GM12878 (cell line): ENCODE measurements at regions of chr2 and their contacts with region 1.

Region 1: GRCh38 chr2:101770726-101771125 is 73.2 kb downstream of the MAP4K4 start:
- DNase-seq: peak; percentile 30
- ATAC-seq: peak; percentile 95
- H3K4me3 ChIP-seq: no peak overlapping the region
- H3K27ac ChIP-seq: no peak overlapping the region
- H3K4me1 ChIP-seq: no peaks in the 10 kb centered on the region
- H3K27me3 ChIP-seq: no peaks in the 10 kb centered on the region
- CTCF ChIP-seq: peak; percentile 54 to 70 (median 56); a peak in 5 of 6 replicates
- EP300 ChIP-seq: no peak
- POLR2A ChIP-seq: no peak
- RAD21 ChIP-seq: peak; percentile 52

Region 2: GRCh38 chr2:101400048-101400447 is 370.7 kb before region 1 on chr2:
- CTCF ChIA-PET with region 1: no interaction called
- POLR2A ChIA-PET with region 1: no interaction called
- RAD21 ChIA-PET with region 1: no interaction called
- SMC1A ChIA-PET with region 1: no interaction called
- in situ Hi-C with region 1: no loop called
- intact Hi-C with region 1: no loop called
- DNase-seq: no peak
- ATAC-seq: no peak
- H3K4me3 ChIP-seq: no peak overlapping the region
- H3K27ac ChIP-seq: no peak overlapping the region
- H3K4me1 ChIP-seq: no peaks in the 10 kb centered on the region
- H3K27me3 ChIP-seq: peaks cover 0 to 14% of the 10 kb centered on the region in 2 experiments; a peak in 2 of 4 replicates
- CTCF ChIP-seq: no peak
- EP300 ChIP-seq: no peak
- POLR2A ChIP-seq: no peak
- RAD21 ChIP-seq: no peak

Region 3: DNA sequence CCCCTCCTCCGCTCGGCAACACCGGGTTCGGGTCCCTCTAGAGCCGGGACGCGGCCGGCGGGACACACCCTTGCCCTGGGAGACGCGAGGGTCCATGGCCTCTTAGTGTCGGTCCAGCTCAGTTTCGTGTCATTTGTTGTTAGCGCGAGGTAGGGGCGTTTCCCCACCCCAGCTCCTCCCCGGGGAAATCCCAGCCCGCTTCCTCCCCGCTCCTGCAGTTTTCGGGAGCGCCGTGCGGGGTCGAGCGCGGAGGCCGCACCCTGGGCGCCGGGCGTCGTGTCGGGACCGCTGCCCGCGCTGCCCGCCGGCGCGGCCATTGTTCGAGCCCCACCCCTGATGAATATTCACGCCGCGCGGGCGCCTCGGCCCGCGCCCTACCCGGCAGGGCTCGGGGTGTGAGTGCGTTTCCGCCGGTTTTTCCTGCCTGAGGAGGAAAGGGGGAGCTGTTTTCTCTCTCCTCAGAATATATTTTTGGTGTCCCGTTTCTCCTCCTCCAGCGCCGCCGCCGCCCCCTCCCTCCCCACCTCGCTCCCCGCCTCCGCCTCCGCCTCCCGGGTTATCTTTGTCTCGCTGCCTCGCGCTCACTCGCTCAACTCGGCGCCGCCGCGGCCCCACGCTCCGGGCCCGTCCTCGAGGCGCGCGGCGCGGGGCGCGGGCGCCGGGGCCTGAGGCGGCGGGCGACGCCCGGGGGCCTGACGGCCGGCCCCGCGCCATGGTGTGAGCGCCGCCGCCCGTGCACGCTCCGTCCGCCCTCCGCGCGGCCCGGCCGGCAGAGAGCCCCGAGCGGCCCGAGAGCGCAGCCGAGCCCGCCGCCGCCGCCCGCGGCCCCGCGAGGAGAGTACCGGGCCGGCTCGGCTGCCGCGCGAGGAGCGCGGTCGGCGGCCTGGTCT is 73.4 kb before region 1 on chr2 and contains the start of gene MAP4K4:
- CTCF ChIA-PET with region 1: interaction called, 15 read pairs
- POLR2A ChIA-PET with region 1: no interaction called
- RAD21 ChIA-PET with region 1: interaction called, 3 read pairs
- SMC1A ChIA-PET with region 1: interaction called, 3 read pairs
- in situ Hi-C with region 1: no loop called
- intact Hi-C with region 1: no loop called
- DNase-seq: no peak
- ATAC-seq: peak; percentile 68
- H3K4me3 ChIP-seq: peak within 1 kb of the TSS; percentile 49
- H3K27ac ChIP-seq: no peak within 1 kb of the TSS
- H3K4me1 ChIP-seq: no peaks in the 10 kb centered on the region; the same call in 1 of the 2 replicates
- H3K27me3 ChIP-seq: peaks cover 2 to 22% of the 10 kb centered on the region in 2 experiments; a peak in 3 of 4 replicates
- CTCF ChIP-seq: peak in 1 of 3 experiments; percentile 10; a peak in 1 of 6 replicates
- EP300 ChIP-seq: no peak
- POLR2A ChIP-seq: 0 out of 2 replicates have a peak, but pooled peaks have one; percentile 24
- RAD21 ChIP-seq: no peak
- polyA plus RNA-seq, gene MAP4K4: 1.9 to 2.5 TPM

Region 4: GRCh38 chr2:101751875-101752619 is 18.7 kb before region 1 on chr2:
- CTCF ChIA-PET with region 1: interaction called, 48 read pairs
- POLR2A ChIA-PET with region 1: interaction called, 6 read pairs
- RAD21 ChIA-PET with region 1: interaction called, 15 read pairs
- SMC1A ChIA-PET with region 1: interaction called, 19 read pairs
- in situ Hi-C with region 1: no loop called
- intact Hi-C with region 1: no loop called
- DNase-seq: peak; percentile 66
- ATAC-seq: peak; percentile 80
- H3K4me3 ChIP-seq: no peak overlapping the region
- H3K27ac ChIP-seq: no peak overlapping the region
- H3K4me1 ChIP-seq: peaks cover 49% of the 10 kb centered on the region
- H3K27me3 ChIP-seq: no peaks in the 10 kb centered on the region
- CTCF ChIP-seq: no peak
- EP300 ChIP-seq: peak; percentile 92 to 95; a peak in 3 of 4 replicates
- POLR2A ChIP-seq: no peak
- RAD21 ChIP-seq: no peak

Region 5: GRCh38 chr2:101781326-101781725 is 10.6 kb after region 1 on chr2:
- CTCF ChIA-PET with region 1: interaction called, 52 read pairs
- POLR2A ChIA-PET with region 1: interaction called, 4 read pairs
- RAD21 ChIA-PET with region 1: interaction called, 28 read pairs
- SMC1A ChIA-PET with region 1: interaction called, 10 read pairs
- in situ Hi-C with region 1: no loop called
- intact Hi-C with region 1: no loop called
- DNase-seq: no peak
- ATAC-seq: peak; percentile 75
- H3K4me3 ChIP-seq: no peak overlapping the region
- H3K27ac ChIP-seq: no peak overlapping the region
- H3K4me1 ChIP-seq: no peaks in the 10 kb centered on the region
- H3K27me3 ChIP-seq: peaks cover 0 to 4% of the 10 kb centered on the region in 2 experiments; a peak in 1 of 4 replicates
- CTCF ChIP-seq: no peak
- EP300 ChIP-seq: no peak
- POLR2A ChIP-seq: no peak
- RAD21 ChIP-seq: no peak

Region 6: GRCh38 chr2:101823347-101823791 is 52.6 kb after region 1 on chr2:
- CTCF ChIA-PET with region 1: interaction called, 204 read pairs
- POLR2A ChIA-PET with region 1: interaction called, 4 read pairs
- RAD21 ChIA-PET with region 1: interaction called, 23 read pairs
- SMC1A ChIA-PET with region 1: interaction called, 102 read pairs
- in situ Hi-C with region 1: no loop called
- intact Hi-C with region 1: no loop called
- DNase-seq: no peak
- ATAC-seq: peak; percentile 90
- H3K4me3 ChIP-seq: no peak overlapping the region
- H3K27ac ChIP-seq: no peak overlapping the region
- H3K4me1 ChIP-seq: no peaks in the 10 kb centered on the region
- H3K27me3 ChIP-seq: no peaks in the 10 kb centered on the region
- CTCF ChIP-seq: peak; percentile 78 to 82 (median 79)
- EP300 ChIP-seq: no peak
- POLR2A ChIP-seq: no peak
- RAD21 ChIP-seq: peak; percentile 71

Region 7: DNA sequence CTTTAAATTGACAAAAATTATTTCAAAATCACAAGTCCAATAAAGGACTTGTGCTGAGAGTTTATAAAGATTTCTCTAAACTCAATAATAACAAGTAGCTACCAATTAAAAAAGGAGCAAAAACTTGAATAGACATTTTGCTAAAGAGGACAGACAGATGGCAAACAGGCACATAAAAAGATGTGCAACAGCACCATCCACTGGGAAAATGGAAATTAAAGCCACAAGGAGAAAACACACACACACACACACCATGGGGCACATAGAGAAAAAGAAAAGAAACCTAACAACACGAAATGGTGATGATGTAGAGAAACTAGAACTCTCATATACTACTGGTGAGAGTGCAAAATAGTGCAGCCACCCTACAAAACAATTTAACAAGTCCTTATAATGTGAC is 689.7 kb after region 1 on chr2:
- CTCF ChIA-PET with region 1: no interaction called
- POLR2A ChIA-PET with region 1: no interaction called
- RAD21 ChIA-PET with region 1: no interaction called
- SMC1A ChIA-PET with region 1: no interaction called
- in situ Hi-C with region 1: no loop called
- intact Hi-C with region 1: no loop called
- DNase-seq: no peak
- ATAC-seq: no peak
- H3K4me3 ChIP-seq: no peak overlapping the region
- H3K27ac ChIP-seq: no peak overlapping the region
- H3K4me1 ChIP-seq: no peaks in the 10 kb centered on the region
- H3K27me3 ChIP-seq: no peaks in the 10 kb centered on the region; a peak in 1 of 4 replicates
- CTCF ChIP-seq: no peak; a peak in 1 of 6 replicates
- EP300 ChIP-seq: no peak
- POLR2A ChIP-seq: no peak
- RAD21 ChIP-seq: no peak